Motor neuron (in vitro differentiated cells): ENCODE measurements at regions of chr11 and their contacts with region 1.

Region 1: DNA sequence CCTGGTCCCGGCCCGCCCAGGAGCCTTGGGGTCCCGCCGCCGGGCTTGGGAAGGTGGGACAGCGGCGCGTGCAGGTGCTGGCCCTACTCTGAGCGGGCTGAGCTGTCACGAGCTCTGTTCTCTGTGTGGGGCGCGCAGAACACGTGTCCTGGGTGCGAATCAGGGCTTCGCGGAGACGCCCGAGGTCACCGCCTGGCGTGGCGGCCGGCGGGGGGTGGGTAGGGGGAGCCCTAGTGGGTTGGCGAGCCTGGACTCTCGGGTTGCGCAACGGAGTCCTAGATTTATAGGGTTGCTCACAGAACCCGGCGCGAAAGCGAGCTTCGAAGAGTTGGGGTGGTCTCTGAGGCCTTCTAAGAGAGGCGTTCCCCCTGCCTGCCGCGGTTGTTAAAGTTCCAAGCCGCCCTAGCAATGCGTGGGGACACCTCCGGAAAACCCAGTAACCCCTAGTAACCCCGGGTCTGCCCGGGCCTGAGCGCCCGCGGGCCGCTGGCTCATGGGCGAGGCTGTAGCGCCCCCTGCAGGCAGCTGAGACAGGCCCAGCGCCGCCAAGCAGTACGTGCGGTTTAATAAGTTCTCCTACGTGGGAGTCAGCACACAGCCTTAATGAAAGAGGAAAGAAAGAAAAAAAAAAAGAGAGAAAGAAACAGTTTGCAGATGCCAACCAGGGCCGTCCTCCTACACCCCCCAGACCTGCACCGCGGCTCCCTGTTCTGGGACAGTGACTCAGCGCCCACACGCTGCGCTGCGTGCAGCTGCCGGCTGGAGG is 2.8 kb downstream of the ADM start:
- ATAC-seq: peak; percentile 30 to 76 (median 67)
- H3K4me3 ChIP-seq: peak overlapping the region; percentile 26 to 57 (median 40)
- H3K27ac ChIP-seq: peak overlapping the region; percentile 0 to 13
- H3K4me1 ChIP-seq: peaks cover 4 to 12% of the 10 kb centered on the region in 2 donors

Region 2: DNA sequence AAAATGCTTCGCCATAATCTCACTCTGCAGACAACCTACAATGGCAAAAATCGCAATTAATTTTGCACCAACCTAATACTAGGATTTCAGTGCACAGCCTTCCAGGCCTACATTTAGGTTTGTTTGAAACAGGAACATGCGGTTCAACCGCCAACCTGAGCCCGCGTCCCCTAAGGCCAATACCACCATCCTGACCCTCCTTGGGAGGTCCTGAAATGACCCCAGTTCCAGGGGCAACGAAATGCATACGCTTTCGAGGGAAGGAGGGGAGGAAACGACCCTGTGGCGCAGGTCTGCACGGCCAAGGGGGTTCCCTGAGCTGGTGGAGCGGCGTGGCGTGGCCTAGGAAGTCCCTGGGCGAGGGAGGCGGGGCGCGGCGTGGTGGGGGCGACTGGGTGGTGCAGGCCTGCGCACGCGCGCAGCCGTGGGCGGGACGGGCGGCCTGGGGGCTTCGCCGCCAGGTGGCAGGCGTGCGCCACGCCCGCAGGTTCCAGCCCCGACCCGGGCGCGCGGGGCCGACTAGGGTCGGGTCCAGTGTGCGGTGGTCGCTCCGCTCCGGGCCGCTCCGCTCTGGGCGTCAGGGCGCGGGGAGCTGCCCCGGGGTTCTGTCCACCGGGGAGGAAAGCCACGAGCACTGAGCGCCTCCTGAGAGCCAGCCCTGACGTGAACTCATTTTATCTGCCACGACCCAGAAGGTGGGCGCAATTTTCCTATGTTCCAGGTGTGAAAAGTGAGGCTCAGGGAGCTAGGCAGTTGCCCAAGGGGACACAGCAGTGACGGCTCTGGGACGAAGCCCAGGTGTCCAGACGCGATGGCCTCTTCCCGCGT is 549.6 kb before region 1 on chr11:
- in situ Hi-C with region 1: loop called in 3 of 9 experiments (anchors 25 kb)
- ATAC-seq: peak; percentile 10 to 93 (median 84)
- H3K4me3 ChIP-seq: peak overlapping the region; percentile 34 to 47 (median 45)
- H3K27ac ChIP-seq: no peak overlapping the region
- H3K4me1 ChIP-seq: peaks cover 11% of the 10 kb centered on the region in 2 donors

Region 3: DNA sequence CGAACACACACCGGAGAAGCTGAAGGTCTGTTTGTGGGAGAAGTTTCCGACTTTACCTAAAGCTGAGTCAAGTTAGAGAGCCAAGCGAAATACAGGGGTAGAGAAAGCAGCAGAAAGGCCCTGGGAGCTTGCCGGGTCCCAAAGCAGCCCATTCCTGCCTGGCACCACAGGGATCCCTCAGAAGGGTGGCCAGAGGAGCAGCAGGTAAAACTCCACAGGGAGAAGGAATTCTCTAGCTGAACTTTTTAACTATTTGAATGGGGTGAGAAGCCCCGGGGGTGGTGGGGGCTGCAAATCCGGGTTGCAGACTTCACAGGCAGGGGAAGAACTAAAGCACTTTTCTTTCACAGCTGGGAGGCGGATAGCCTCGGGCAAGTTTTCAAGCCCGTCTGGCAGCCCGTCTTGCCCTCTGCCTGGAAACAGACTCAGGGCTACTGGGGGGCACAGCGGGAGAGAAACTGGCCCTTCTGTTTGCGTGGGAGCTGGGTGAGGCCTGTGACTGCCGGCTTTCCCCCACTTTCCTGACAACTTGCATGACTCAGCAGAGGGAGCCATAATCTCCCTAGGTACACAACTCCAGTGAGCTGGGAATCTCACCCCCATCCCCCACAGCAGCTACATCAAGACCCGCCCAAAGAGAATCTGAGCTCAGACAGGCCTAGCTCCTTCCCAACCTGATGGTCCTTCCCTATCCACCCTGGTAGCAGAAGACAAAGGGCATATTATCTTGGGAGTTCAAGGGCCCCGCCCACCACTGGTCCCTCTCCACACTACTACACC is 324.6 kb before region 1 on chr11:
- in situ Hi-C with region 1: loop called in 1 of 9 experiments (anchors 25 kb)
- ATAC-seq: peak in 4 of 8 experiments; percentile 18 to 69 (median 40)
- H3K4me3 ChIP-seq: no peak overlapping the region
- H3K27ac ChIP-seq: no peak overlapping the region
- H3K4me1 ChIP-seq: no peaks in the 10 kb centered on the region

Region 4: GRCh38 chr11:10208131-10208575 is 99.5 kb before region 1 on chr11:
- in situ Hi-C with region 1: loop called in 1 of 9 experiments (anchors 25 kb)
- ATAC-seq: peak in 3 of 8 experiments; percentile 69 to 75 (median 74)
- H3K4me3 ChIP-seq: no peak overlapping the region
- H3K27ac ChIP-seq: no peak overlapping the region
- H3K4me1 ChIP-seq: no peaks in the 10 kb centered on the region

Region 5: GRCh38 chr11:10414659-10415058 is 107.0 kb after region 1 on chr11:
- in situ Hi-C with region 1: no loop called
- ATAC-seq: peak in 1 of 8 experiments; percentile 49
- H3K4me3 ChIP-seq: no peak overlapping the region
- H3K27ac ChIP-seq: no peak overlapping the region
- H3K4me1 ChIP-seq: no peaks in the 10 kb centered on the region

Region 6: DNA sequence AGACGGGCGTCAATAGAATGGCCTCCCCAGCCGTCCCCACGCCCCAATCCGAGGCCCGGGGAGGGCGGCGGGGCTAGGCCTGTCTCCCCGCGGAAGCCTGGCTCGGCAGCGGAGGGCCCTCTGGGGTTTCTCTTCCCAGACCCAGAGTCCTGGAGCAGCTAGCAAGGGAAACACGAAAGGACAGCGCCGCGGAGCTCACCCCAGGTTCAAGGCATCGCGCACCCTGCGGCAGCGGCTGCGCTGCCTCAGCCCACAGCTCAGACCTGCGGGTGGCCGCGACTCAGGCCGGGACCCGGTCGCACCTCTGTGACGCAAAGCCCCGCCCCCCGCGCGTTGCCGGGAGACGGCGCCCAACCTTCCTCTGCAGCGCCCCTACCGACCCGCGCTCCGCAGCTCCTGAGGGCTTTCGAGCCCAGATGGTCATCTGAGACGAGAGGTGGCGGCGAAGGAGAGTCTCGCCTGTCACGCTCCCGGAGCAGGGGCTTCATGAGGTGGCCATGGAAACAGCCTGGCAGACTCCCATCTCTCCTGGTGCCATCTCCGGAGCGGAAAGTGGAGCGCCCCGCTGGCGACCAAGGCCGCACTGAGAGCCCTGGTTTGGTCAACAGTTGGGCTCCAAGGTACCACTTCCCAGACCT is 233.4 kb after region 1 on chr11 and contains the start of gene RNF141:
- in situ Hi-C with region 1: no loop called
- ATAC-seq: peak; percentile 96 to 98 (median 97)
- H3K4me3 ChIP-seq: peak within 1 kb of the TSS; percentile 68 to 85 (median 70)
- H3K27ac ChIP-seq: peak within 1 kb of the TSS; percentile 72 to 78
- H3K4me1 ChIP-seq: peaks cover 4% of the 10 kb centered on the region in 2 donors
- total RNA-seq, gene RNF141: 19.0 to 44.3 (median 21.9) TPM